ENCODE measurements at regions of chr2 and their contacts with region 1.

Region 1: DNA sequence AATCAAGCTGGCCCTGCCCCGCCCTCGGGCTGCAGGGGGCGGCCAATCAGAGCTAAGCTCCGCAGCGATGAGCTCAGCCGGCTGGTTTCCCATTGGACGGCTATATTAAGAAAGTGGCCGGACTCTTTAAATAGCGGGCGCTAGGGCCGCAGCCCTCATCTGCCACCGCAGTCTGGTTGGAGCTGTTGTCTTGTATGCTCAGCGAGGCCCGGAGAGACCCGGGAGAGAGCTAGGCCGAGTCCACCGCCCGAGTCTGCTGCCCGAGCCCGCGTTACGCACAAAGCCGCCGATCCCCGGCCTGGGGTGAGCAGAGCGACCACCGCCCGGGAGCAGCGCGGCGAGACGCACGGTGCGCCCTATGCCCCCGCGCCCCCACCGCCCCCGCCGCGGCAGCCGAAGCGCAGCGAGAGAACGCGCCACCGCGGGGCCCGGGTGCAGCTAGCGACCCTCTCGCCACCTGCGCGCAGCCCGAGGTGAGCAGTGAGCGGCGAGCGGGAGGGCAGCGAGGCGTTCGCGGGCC is at the start of gene RHOB:
- DNase-seq: peak; percentile 96
- H3K4me3 ChIP-seq: peak within 1 kb of the TSS; percentile 71
- CTCF ChIP-seq: no peak

Region 2: GRCh38 chr2:20483194-20483895 is 36.4 kb after region 1 on chr2:
- in situ Hi-C with region 1: no loop called
- DNase-seq: no peak
- H3K4me3 ChIP-seq: no peak overlapping the region
- CTCF ChIP-seq: no peak

Region 3: DNA sequence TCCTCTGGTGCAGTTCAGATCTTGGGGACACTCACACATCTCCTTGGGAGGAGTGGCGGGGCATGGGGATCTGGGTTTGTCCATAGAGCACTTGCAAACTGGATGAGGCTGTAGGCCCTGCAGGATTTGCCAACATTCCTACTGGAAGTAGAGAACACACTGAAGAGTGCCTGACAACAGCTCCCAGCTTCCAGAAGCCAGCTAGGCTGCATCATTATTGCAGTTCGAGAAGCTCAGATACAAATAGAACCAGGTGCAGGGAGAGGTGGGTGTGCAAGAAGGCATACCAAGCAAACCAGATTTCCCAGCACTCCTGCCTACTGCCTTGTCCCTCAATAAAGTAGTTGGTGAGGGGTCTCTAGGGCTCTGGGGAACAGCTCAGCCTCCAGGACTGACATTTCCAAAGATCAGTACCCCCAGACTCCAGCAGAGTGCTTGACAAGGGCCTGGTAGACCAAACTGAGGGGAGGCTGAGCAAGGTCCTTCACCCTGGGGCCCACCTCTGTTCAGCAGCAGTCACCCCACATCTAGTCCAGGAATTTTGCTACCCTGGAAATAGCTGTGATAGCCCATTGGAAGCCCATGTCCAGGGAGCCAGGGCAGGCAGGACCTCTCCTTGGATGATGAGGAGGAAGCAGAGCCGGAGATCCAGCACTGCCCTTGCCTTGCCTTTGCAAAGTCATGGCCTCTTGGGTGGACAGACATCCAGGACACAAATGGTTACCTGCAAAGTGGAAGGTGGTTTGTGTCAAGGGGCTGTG is 52.6 kb after region 1 on chr2:
- in situ Hi-C with region 1: no loop called
- DNase-seq: no peak
- H3K4me3 ChIP-seq: no peak overlapping the region
- CTCF ChIP-seq: no peak

Region 4: DNA sequence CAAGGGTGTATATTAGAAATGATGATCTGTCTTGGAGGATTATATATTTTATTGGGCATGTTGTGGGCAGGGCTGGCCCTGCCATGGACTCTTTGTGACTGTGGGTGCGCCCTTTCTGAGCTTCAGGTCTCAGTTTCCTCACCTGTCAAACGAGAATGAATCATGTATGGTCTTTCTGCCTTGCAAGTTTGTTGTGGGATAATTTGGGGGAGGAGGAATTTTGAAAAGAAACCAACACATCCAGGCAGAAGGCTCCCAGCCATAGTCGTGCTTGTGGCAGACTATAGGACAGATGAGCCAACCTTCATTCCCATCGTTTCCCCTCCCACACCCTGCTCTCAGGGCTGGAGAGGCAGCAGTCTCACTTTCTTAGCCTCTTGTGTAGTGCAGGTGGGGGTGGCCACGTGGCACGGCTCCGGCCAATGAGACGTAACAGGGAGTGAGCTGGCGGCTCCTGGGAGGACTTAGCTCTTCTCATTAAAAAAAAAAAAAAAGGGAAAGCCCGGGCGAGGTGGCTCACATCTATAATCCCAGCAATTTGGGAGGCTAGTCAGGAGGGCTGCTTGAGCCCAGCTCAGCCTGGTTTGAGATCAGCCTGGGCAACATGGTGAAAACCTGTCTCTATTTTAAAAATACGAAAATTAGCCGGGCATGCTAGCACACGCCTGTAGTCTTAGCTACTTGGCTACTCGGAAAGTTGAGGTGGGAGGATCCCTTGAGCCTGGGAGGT is 63.0 kb after region 1 on chr2:
- in situ Hi-C with region 1: loop called (anchors 5 kb)
- DNase-seq: no peak
- H3K4me3 ChIP-seq: no peak overlapping the region
- CTCF ChIP-seq: no peak

Region 5: DNA sequence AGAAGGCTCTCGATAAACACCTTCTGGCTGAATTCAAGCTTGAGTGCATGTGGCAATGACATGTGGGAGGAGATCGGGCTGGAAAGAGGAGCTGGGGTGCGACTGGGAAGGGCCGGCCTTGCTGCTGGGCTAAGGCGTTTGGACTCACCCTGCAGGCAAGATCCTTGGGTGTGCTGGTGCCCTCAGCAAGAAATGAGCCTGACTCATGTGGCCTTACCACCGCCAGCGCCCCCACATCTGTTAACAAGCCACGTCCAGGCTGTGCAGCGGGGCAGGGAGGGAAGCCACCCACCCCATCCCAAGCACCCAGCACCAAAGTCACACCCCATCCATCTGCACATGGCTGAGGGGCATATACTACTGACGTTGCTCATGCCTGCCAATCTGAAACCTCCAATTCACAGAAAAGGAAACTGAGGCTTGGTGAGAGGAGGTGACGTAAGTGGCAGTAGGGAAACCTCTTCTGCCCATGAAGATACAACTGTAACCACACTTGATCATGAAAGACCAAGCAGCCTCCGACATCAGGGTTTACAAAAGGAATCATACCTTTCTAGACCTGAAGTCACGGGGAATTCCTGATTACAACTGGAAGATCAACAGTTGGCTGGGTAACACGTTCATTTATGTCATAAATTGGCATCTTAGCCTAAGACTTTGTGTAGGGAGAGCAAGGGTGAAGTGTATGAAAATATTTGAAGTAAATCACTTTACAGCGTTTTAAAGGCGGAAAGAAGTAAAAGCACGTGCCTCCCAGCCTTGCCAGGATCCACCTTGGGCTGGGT is 202.8 kb after region 1 on chr2:
- in situ Hi-C with region 1: loop called (anchors 5 kb)
- DNase-seq: no peak
- H3K4me3 ChIP-seq: peak overlapping the region; percentile 87
- CTCF ChIP-seq: no peak

Measured in astrocyte of the cerebellum (primary cell).